ENCODE measurements at regions of chr5 and their contacts with region 1.

Region 1: GRCh38 chr5:124741711-124742496 is 4.5 kb downstream of the ZNF608 start:
- DNase-seq: peak; percentile 93
- H3K4me3 ChIP-seq: peak overlapping the region; percentile 71
- CTCF ChIP-seq: no peak

Region 2: DNA sequence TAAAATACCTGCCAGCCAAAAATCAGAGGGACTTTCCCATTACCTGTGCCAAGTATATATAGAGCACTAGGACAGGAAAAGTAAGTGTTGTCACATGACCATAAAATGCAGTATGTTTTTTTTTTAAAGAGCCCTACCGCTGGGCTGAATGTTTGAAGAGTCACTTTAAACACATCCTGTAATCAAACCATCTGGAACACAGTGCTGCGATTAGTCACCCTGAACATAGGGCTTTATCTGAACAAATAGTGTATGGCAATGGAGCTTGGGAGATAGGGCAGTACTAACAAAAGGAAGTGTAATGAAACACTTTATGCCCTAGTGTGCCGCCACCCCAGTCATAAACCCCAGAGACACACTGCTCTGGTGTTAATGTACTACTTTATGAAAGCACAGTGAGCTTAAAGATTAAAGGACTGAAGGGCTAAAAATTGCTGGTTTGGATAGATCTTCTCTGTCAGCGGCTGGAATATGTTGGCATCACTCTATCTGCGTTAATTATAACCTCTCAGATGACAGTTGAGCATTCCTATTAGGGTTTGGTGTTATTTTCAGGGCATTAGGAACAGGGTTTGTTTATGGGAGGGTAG is 85.9 kb before region 1 on chr5:
- in situ Hi-C with region 1: loop called (anchors 5 kb)
- DNase-seq: peak; percentile 80
- H3K4me3 ChIP-seq: peak overlapping the region; percentile 14
- CTCF ChIP-seq: no peak

Measured in astrocyte of the cerebellum (primary cell).